CD4-positive, alpha-beta memory T cell (primary cell): ENCODE measurements at regions of chr1 and their contacts with region 1.

Region 1: DNA sequence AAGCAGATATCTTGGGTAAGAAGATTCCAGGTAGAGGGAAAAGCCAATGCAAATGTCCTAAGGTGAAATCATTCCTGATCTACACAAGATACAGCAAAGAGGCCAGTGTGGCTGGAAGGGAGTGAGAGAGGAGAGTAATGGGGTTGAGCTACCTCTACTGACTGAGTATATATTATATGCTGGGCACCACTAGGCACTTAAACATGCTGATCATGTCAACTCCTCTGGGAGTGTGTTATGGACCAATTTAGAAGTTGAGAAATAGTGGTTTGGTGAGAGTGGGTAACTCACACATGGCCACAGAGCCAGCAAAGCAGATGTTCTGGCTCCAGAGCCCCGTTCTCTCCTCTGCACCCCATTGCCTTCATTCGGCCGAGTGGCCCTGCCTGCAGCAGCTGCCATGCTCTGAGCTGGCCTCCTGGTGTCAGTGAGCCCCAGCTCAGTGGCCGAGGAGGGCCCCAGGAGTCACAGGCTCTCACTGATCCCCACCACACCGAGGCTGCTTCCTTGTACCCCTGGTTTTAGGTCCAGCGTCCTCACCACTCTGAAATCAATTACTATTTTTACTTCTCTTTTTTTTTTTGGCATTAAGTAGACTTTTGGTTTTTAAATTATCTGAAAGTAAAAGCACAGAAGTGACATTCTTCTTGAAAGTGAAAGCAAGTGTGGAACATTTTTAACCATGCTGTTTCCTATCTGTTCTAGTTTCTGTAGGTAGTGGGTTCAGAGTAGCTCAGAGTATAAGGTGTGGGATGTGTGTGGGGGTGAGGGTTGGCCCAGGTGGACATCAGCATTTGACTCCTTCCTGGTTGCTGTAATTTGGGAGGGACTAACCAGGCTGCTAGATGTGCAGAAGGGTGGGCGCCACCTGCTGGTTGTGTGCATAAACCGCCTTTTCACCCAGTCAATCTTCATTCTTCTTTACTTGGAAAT is 45.8 kb upstream of the CRNN start:
- DNase-seq: peak; percentile 70 to 72 (median 71)
- H3K4me3 ChIP-seq: peak overlapping the region in 1 of 2 donors; percentile 9
- H3K4me3 Mint-ChIP-seq: peak overlapping the region; percentile 61 to 88 (median 80)
- H3K27ac ChIP-seq: peak overlapping the region; percentile 39
- H3K27ac Mint-ChIP-seq: peak overlapping the region; percentile 49 to 97 (median 87)
- H3K4me1 ChIP-seq: peaks cover 15% of the 10 kb centered on the region
- H3K4me1 Mint-ChIP-seq: peaks cover 24 to 36% (median 30%) of the 10 kb centered on the region in 4 donors
- H3K27me3 ChIP-seq: no peaks in the 10 kb centered on the region
- H3K27me3 Mint-ChIP-seq: peaks cover 2 to 4% of the 10 kb centered on the region in 2 donors

Region 2: GRCh38 chr1:152001391-152002249 is 458.2 kb before region 1 on chr1:
- CTCF ChIA-PET with region 1: interaction called, 15 read pairs
- POLR2A ChIA-PET with region 1: no interaction called
- intact Hi-C with region 1: no loop called
- DNase-seq: peak; percentile 66 to 79 (median 70)
- H3K4me3 ChIP-seq: no peak overlapping the region
- H3K4me3 Mint-ChIP-seq: no peak overlapping the region
- H3K27ac ChIP-seq: no peak overlapping the region
- H3K27ac Mint-ChIP-seq: peak overlapping the region in 3 of 7 donors; percentile 36 to 60 (median 51)
- H3K4me1 ChIP-seq: no peaks in the 10 kb centered on the region
- H3K4me1 Mint-ChIP-seq: peaks cover 0 to 3% (median under 1%) of the 10 kb centered on the region in 4 donors
- H3K27me3 ChIP-seq: no peaks in the 10 kb centered on the region
- H3K27me3 Mint-ChIP-seq: no peaks in the 10 kb centered on the region

Region 3: GRCh38 chr1:152182431-152182830 is 277.4 kb before region 1 on chr1:
- CTCF ChIA-PET with region 1: interaction called, 326 read pairs
- POLR2A ChIA-PET with region 1: interaction called, 44 read pairs
- intact Hi-C with region 1: no loop called
- DNase-seq: no peak
- H3K4me3 ChIP-seq: no peak overlapping the region
- H3K4me3 Mint-ChIP-seq: no peak overlapping the region
- H3K27ac ChIP-seq: no peak overlapping the region
- H3K27ac Mint-ChIP-seq: no peak overlapping the region
- H3K4me1 ChIP-seq: no peaks in the 10 kb centered on the region
- H3K4me1 Mint-ChIP-seq: peaks cover 0 to 2% (median under 1%) of the 10 kb centered on the region in 4 donors
- H3K27me3 ChIP-seq: no peaks in the 10 kb centered on the region
- H3K27me3 Mint-ChIP-seq: peaks cover 0 to 6% of the 10 kb centered on the region in 2 donors

Region 4: GRCh38 chr1:152347116-152347728 is 112.6 kb before region 1 on chr1:
- CTCF ChIA-PET with region 1: interaction called, 41 read pairs
- POLR2A ChIA-PET with region 1: interaction called, 3 read pairs
- intact Hi-C with region 1: loop called (anchors 1 kb)
- DNase-seq: peak; percentile 55 to 67 (median 60)
- H3K4me3 ChIP-seq: no peak overlapping the region
- H3K4me3 Mint-ChIP-seq: no peak overlapping the region
- H3K27ac ChIP-seq: no peak overlapping the region
- H3K27ac Mint-ChIP-seq: no peak overlapping the region
- H3K4me1 ChIP-seq: no peaks in the 10 kb centered on the region
- H3K4me1 Mint-ChIP-seq: peaks cover 0 to 2% (median under 1%) of the 10 kb centered on the region in 4 donors
- H3K27me3 ChIP-seq: no peaks in the 10 kb centered on the region
- H3K27me3 Mint-ChIP-seq: peaks cover 7 to 9% of the 10 kb centered on the region in 2 donors

Region 5: GRCh38 chr1:152440635-152441471 is 19.0 kb before region 1 on chr1:
- CTCF ChIA-PET with region 1: interaction called, 119 read pairs
- POLR2A ChIA-PET with region 1: no interaction called
- intact Hi-C with region 1: loop called (anchors 1 kb)
- DNase-seq: peak; percentile 74 to 77 (median 75)
- H3K4me3 ChIP-seq: no peak overlapping the region
- H3K4me3 Mint-ChIP-seq: peak overlapping the region in 1 of 8 donors; percentile 56
- H3K27ac ChIP-seq: no peak overlapping the region
- H3K27ac Mint-ChIP-seq: peak overlapping the region in 2 of 7 donors; percentile 44 to 68
- H3K4me1 ChIP-seq: no peaks in the 10 kb centered on the region
- H3K4me1 Mint-ChIP-seq: peaks cover 4 to 14% (median 8%) of the 10 kb centered on the region in 4 donors
- H3K27me3 ChIP-seq: no peaks in the 10 kb centered on the region
- H3K27me3 Mint-ChIP-seq: peaks cover 19 to 22% of the 10 kb centered on the region in 2 donors

Region 6: DNA sequence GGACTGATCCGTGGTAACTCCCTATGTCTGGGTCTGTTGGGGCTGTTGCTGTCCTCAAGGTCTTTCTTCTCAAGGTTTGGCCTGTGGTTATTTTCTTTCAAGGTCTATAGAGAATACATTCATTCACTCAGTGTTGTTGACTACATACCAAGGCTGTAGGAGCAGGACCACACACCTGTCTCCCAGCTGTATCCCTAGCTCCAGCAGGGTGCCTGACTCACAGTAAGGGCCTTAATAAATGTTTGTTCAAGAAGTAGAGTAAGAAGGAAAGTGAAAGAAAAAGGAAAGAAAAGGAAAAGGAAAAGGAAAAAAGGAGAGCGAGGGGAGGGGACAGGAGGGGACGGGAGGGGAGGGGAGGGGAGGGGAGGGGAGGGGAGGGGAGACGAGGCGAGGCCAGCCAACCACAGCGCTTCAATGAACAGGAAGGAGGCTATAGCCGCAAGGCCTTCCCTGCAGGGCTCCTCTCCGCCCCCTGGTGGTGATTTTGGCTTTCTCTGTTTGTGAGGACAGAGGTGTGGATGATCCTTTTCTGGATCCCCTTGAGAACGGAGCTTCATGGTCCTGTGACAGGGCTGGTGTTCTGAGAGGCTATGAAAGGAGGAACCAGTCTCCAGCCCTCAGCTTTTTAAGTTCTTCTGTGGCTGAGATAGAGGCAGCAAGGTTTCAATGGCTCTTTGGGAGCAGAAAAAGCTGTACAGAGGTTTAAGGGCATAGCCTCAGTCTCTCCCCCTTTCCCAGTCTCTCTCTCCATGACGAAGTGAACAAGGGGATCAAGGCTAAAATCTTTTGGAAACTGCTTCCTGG is 20.1 kb after region 1 on chr1:
- CTCF ChIA-PET with region 1: interaction called, 14 read pairs
- POLR2A ChIA-PET with region 1: interaction called, 3 read pairs
- intact Hi-C with region 1: no loop called
- DNase-seq: peak; percentile 48 to 65 (median 54)
- H3K4me3 ChIP-seq: no peak overlapping the region
- H3K4me3 Mint-ChIP-seq: peak overlapping the region in 7 of 8 donors; percentile 9 to 68 (median 34)
- H3K27ac ChIP-seq: no peak overlapping the region
- H3K27ac Mint-ChIP-seq: peak overlapping the region in 4 of 7 donors; percentile 5 to 69 (median 50)
- H3K4me1 ChIP-seq: peaks cover 11% of the 10 kb centered on the region
- H3K4me1 Mint-ChIP-seq: peaks cover 6 to 30% (median 15%) of the 10 kb centered on the region in 4 donors
- H3K27me3 ChIP-seq: no peaks in the 10 kb centered on the region
- H3K27me3 Mint-ChIP-seq: peaks cover 0 to 3% of the 10 kb centered on the region in 2 donors

Region 7: DNA sequence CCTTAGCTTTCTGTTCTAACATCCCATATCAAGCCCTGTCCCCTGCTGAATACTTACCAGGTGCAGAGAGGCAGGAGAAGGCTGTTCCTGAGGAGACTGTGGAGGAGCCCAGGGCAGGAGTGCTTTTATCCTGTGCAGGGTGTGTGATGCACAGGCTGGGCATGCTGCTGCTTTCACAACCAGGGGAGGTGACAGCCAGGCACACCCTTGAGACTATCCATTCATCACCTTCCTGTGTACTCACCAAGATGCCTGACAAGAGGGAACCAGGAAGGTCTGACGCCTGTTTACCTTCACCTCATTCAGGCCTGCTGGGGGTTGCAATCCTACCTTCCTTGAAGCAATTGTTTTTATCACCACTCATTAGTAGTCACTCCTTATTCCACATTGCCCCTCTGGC is 106.8 kb after region 1 on chr1 and contains the start of gene LCE3E:
- CTCF ChIA-PET with region 1: no interaction called
- POLR2A ChIA-PET with region 1: no interaction called
- intact Hi-C with region 1: no loop called
- DNase-seq: no peak
- H3K4me3 ChIP-seq: no peak within 1 kb of the TSS
- H3K4me3 Mint-ChIP-seq: no peak within 1 kb of the TSS
- H3K27ac ChIP-seq: no peak within 1 kb of the TSS
- H3K27ac Mint-ChIP-seq: no peak within 1 kb of the TSS
- H3K4me1 ChIP-seq: no peaks in the 10 kb centered on the region
- H3K4me1 Mint-ChIP-seq: no peaks in the 10 kb centered on the region
- H3K27me3 ChIP-seq: no peaks in the 10 kb centered on the region
- H3K27me3 Mint-ChIP-seq: peaks cover 6 to 8% of the 10 kb centered on the region in 2 donors
- total RNA-seq, gene LCE3E: not detected